Psoas muscle (tissue), 8 donors: ENCODE measurements at regions of chr1 and their contacts with region 1.

Region 1: GRCh38 chr1:25223471-25223870 is 8.8 kb downstream of the SYF2 start:
- DNase-seq: no peak
- ATAC-seq: no peak
- H3K4me3 ChIP-seq: no peak overlapping the region
- H3K27ac ChIP-seq: no peak overlapping the region
- H3K4me1 ChIP-seq: no peaks in the 10 kb centered on the region
- H3K27me3 ChIP-seq: no peaks in the 10 kb centered on the region
- CTCF ChIP-seq: no peak

Region 2: GRCh38 chr1:24659993-24660665 is 563.3 kb before region 1 on chr1:
- intact Hi-C with region 1: loop called (anchors 10 kb)
- DNase-seq: no peak
- ATAC-seq: no peak
- H3K4me3 ChIP-seq: no peak overlapping the region
- H3K27ac ChIP-seq: no peak overlapping the region
- H3K4me1 ChIP-seq: no peaks in the 10 kb centered on the region
- H3K27me3 ChIP-seq: no peaks in the 10 kb centered on the region
- CTCF ChIP-seq: no peak